ENCODE measurements at regions of chr3 and their contacts with region 1.

Region 1: GRCh38 chr3:141114816-141115460 is 63.8 kb downstream of the SPSB4 start:
- DNase-seq: peak; percentile 63
- ATAC-seq: peak; percentile 99
- H3K4me3 Mint-ChIP-seq: no peak overlapping the region
- H3K27ac Mint-ChIP-seq: no peak overlapping the region; the same call in 1 of the 2 replicates
- H3K4me1 Mint-ChIP-seq: peaks cover 4% of the 10 kb centered on the region; the same call in 1 of the 2 replicates
- H3K27me3 Mint-ChIP-seq: no peaks in the 10 kb centered on the region
- CTCF ChIP-seq: peak; percentile 36

Region 2: GRCh38 chr3:141011232-141011996 is 103.5 kb before region 1 on chr3:
- CTCF ChIA-PET with region 1: interaction called, 34 read pairs
- POLR2A ChIA-PET with region 1: no interaction called
- DNase-seq: peak; percentile 95
- ATAC-seq: peak; percentile 96
- H3K4me3 Mint-ChIP-seq: no peak overlapping the region
- H3K27ac Mint-ChIP-seq: no peak overlapping the region
- H3K4me1 Mint-ChIP-seq: peaks cover 24% of the 10 kb centered on the region
- H3K27me3 Mint-ChIP-seq: no peaks in the 10 kb centered on the region; the same call in 1 of the 2 replicates
- CTCF ChIP-seq: peak; percentile 81

Region 3: GRCh38 chr3:141071681-141072260 is 43.2 kb before region 1 on chr3:
- CTCF ChIA-PET with region 1: interaction called, 18 read pairs
- POLR2A ChIA-PET with region 1: no interaction called
- DNase-seq: no peak
- ATAC-seq: no peak
- H3K4me3 Mint-ChIP-seq: no peak overlapping the region
- H3K27ac Mint-ChIP-seq: peak overlapping the region; percentile 90; the same call in 1 of the 2 replicates
- H3K4me1 Mint-ChIP-seq: peaks cover 92% of the 10 kb centered on the region
- H3K27me3 Mint-ChIP-seq: peaks cover 10% of the 10 kb centered on the region
- CTCF ChIP-seq: no peak

Region 4: DNA sequence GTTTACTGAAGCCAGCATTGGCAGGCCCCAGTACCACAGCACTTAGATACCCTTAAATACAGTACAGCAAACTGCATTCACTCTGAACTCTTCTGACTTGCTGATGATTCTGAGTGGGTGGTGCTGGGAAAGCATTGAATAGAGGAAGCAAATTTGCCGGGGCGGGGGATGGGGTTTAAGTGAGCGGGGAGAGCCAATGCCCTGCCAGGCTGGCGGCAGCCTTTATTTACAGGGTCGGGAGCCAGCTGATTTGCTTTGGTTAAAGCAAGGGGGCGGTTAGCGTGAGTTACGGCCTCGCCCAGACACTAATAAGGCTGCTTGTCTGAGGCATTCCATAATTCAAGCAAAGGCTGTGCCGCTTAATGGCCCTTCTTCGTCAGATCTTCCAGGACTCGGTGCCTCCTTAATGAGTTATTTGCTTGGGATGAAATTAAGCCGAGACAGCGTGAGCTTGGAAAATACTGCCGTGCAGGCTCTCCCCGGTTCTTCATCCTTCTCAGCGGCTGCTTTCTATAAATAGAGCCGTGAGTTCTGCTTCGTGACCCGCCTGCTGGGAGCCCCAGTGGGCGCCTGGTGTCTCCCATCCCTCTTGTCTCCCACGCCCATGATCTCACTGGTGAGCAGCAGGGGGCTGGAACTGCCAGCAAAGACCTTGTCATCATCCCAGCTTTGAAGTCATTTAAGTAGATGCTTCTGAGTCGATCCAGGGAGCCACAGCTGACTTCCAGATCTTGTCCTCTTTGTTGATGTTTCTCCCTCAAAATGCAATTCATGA is 38.0 kb before region 1 on chr3:
- CTCF ChIA-PET with region 1: interaction called, 18 read pairs
- POLR2A ChIA-PET with region 1: no interaction called
- DNase-seq: peak; percentile 45
- ATAC-seq: peak; percentile 9
- H3K4me3 Mint-ChIP-seq: 0 out of 2 replicates have a peak overlapping the region, but pooled peaks have one; percentile 6
- H3K27ac Mint-ChIP-seq: peak overlapping the region; percentile 89
- H3K4me1 Mint-ChIP-seq: peaks cover 95% of the 10 kb centered on the region
- H3K27me3 Mint-ChIP-seq: peaks cover 1% of the 10 kb centered on the region; the same call in 1 of the 2 replicates
- CTCF ChIP-seq: no peak

Region 5: DNA sequence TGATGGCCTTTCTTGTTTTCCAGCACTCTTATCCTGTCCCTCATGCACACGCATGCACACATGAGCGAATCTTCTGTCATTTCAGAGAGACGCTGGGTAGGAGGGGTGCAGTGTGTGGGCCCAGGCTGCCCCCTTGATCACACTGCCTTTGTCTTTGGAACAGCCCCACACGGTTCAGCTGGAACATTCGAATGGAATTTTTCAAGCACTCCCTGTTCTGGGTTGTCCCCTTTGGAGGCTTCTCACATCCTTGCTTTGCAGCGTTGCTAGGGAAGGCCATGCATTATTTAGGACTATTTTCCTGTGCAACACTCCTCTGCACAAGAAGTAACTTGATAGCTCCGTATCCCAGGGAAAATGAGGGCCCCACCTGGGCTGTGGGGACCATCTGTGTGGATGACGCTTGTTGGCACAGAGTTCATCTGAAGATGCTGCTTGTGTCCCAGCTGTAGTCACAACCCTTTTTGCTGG is 14.6 kb after region 1 on chr3:
- CTCF ChIA-PET with region 1: interaction called, 13 read pairs
- POLR2A ChIA-PET with region 1: no interaction called
- DNase-seq: no peak
- ATAC-seq: no peak
- H3K4me3 Mint-ChIP-seq: no peak overlapping the region
- H3K27ac Mint-ChIP-seq: no peak overlapping the region
- H3K4me1 Mint-ChIP-seq: no peaks in the 10 kb centered on the region
- H3K27me3 Mint-ChIP-seq: no peaks in the 10 kb centered on the region
- CTCF ChIP-seq: no peak

Region 6: GRCh38 chr3:141192345-141192744 is 77.4 kb after region 1 on chr3:
- CTCF ChIA-PET with region 1: interaction called, 11 read pairs
- POLR2A ChIA-PET with region 1: no interaction called
- DNase-seq: peak; percentile 100
- ATAC-seq: peak; percentile 98
- H3K4me3 Mint-ChIP-seq: no peak overlapping the region
- H3K27ac Mint-ChIP-seq: no peak overlapping the region
- H3K4me1 Mint-ChIP-seq: no peaks in the 10 kb centered on the region
- H3K27me3 Mint-ChIP-seq: peaks cover 16% of the 10 kb centered on the region
- CTCF ChIP-seq: peak; percentile 98

Measured in WTC11 (cell line).